Activated CD8-positive, alpha-beta memory T cell treated with anti-CD3 and anti-CD28 coated beads, Interleukin-2, amount 10 ng/mL, durations not matched to agents 7 days and 5 days (primary cell): ENCODE measurements at regions of chr7 and their contacts with region 1.

Region 1: GRCh38 chr7:151759591-151760042 is 117.3 kb downstream of the PRKAG2 start:
- DNase-seq: peak; percentile 71
- ATAC-seq: peak; percentile 59
- H3K4me3 Mint-ChIP-seq: no peak overlapping the region
- H3K27ac Mint-ChIP-seq: no peak overlapping the region
- H3K4me1 Mint-ChIP-seq: peaks cover 23% of the 10 kb centered on the region
- H3K27me3 Mint-ChIP-seq: no peaks in the 10 kb centered on the region

Region 2: DNA sequence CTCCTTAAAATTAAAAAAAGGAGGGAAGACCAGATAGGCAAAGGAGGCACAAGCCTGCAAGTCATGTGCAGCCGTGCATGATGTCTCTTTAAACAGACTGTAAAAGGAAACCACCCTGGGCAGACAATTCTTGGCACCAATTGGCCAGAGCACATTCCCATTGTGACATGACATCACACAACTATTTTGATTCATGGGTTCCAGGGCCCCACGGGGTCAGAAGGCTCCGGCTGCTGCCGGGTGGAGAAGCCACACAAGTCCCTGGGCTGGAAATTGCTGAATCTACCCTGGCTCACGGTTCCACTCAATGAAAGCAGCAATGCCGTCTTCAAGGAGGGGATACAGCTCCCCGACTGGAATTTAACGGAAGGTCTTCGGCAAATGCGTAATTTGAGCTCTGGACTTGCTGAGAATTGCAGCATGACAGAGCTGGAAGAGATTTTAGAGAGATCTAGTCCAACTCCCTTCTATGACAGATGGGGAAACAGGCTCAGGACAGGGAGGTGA is 23.2 kb before region 1 on chr7:
- CTCF ChIA-PET with region 1: interaction called, 17 read pairs
- DNase-seq: no peak
- ATAC-seq: no peak
- H3K4me3 Mint-ChIP-seq: no peak overlapping the region
- H3K27ac Mint-ChIP-seq: no peak overlapping the region
- H3K4me1 Mint-ChIP-seq: no peaks in the 10 kb centered on the region
- H3K27me3 Mint-ChIP-seq: no peaks in the 10 kb centered on the region

Region 3: GRCh38 chr7:151748733-151749132 is 10.9 kb before region 1 on chr7:
- CTCF ChIA-PET with region 1: interaction called, 11 read pairs
- DNase-seq: no peak
- ATAC-seq: no peak
- H3K4me3 Mint-ChIP-seq: no peak overlapping the region
- H3K27ac Mint-ChIP-seq: no peak overlapping the region
- H3K4me1 Mint-ChIP-seq: peaks cover 30% of the 10 kb centered on the region
- H3K27me3 Mint-ChIP-seq: no peaks in the 10 kb centered on the region